Right ventricle myocardium inferior (tissue), 1 donor: ENCODE measurements at regions of chr11 and their contacts with region 1.

Region 1: DNA sequence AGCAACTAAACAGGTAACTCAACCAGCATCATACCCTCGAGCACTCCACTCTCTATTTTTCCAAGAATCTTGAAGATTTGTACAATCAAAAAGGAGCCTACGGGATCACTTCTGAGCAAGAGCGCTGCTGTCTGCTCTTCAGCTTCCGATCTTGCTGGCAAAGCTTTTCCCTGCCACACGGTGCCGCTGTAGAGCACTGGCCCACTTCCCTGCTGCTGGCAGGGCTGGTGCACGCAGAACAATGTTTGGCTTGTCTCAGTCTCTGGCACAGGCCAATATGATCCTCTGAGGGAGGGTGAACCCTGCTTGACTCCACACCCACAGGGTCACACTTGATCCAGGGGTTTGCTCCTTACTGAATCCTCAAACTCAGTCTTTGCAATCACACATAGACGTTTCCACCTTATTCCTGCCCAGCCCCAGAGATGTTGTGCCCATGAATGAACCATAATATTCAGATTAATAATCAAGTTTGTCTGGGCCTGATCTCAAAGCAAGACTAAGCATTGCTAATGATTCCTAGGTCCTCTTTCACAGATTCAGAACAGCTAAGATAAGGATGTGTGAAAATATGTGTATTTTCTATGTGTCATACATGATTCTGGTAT is 536.6 kb downstream of the SOX6 start:
- DNase-seq: peak; percentile 88
- ATAC-seq: peak; percentile 94

Region 2: GRCh38 chr11:15883455-15883920 is 63.7 kb after region 1 on chr11:
- intact Hi-C with region 1: loop called (anchors 10 kb)
- DNase-seq: no peak
- ATAC-seq: peak; percentile 43

Region 3: GRCh38 chr11:15976433-15977045 is 156.8 kb after region 1 on chr11:
- intact Hi-C with region 1: no loop called
- DNase-seq: no peak
- ATAC-seq: peak; percentile 30